ENCODE measurements at regions of chr17 and their contacts with region 1.

Region 1: GRCh38 chr17:61139219-61139618 is 260.4 kb upstream of the TBX2 start:
- DNase-seq: no peak
- ATAC-seq: peak in 3 of 4 donors; percentile 46 to 73 (median 72)
- H3K4me3 ChIP-seq: no peak overlapping the region
- H3K27ac ChIP-seq: peak overlapping the region in 1 of 12 donors; percentile 47
- H3K4me1 ChIP-seq: peaks cover 0 to 29% (median 4%) of the 10 kb centered on the region in 12 donors
- H3K27me3 ChIP-seq: no peaks in the 10 kb centered on the region
- CTCF ChIP-seq: no peak
- POLR2A ChIP-seq: no peak

Region 2: DNA sequence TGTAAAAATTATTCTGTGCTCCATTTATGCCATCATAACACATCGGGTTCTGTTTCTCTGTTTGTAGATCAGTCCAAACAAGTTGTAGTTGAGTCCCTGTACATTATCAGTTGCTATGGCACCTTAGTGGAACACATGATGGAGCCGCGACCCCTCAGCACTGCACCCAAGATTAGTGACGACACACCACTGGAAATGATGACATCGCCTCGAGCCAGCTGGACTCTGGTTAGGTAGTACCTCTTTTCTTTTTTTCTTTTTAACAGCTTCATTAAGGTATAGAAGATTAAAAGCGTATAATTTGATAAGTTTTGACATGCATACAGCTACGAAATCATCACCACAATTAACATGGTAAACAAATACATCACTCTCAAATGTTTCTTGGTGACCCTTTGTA is 101.4 kb before region 1 on chr17:
- intact Hi-C with region 1: no loop called
- DNase-seq: no peak
- ATAC-seq: no peak
- H3K4me3 ChIP-seq: no peak overlapping the region
- H3K27ac ChIP-seq: no peak overlapping the region
- H3K4me1 ChIP-seq: no peaks in the 10 kb centered on the region
- H3K27me3 ChIP-seq: no peaks in the 10 kb centered on the region
- CTCF ChIP-seq: no peak
- POLR2A ChIP-seq: no peak

Region 3: DNA sequence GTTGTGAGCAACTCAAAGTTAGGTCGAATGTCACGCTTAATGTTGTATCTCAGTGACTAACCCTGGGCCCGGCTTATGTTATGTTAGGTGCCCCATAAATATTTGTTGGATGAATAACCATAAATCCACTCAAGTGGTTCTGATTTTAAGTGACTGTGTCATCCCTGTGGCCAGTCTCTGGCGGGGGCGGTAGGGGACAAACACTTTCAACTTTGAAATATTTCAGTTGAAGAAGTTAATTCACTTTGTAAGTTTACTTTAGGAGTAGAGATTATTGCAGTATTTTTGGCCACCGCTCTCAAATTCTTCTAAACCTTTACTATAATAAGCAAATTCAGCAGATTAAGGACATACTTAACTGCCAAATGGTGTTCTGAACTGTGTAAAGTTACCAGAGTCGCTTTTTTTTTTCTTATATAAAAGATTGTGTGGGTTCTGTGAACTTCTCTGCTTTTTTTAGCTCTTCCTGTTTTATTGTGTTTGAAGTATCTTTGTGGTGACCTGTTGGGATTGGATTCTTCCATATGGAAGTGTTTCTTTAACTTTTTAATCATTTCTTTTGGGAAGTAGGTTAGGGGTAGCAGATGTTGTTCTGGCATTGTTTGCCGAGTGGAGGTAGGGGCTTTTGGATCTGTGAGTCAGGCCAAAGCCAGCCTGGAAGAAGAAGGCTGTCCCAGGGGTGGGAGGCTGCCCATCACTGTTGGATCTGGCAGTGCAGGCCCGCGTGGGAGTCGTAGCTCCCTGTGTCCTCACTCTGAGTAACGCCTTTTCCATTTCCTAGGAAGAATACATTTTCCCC is 199.0 kb after region 1 on chr17:
- intact Hi-C with region 1: loop called in 1 of 10 experiments (anchors 10 kb)
- DNase-seq: peak in 2 of 5 donors; percentile 53 to 67
- ATAC-seq: peak in 2 of 4 donors; percentile 41 to 80
- H3K4me3 ChIP-seq: no peak overlapping the region
- H3K27ac ChIP-seq: peak overlapping the region in 11 of 12 donors; percentile 4 to 60 (median 35)
- H3K4me1 ChIP-seq: peaks cover 0 to 40% (median 31%) of the 10 kb centered on the region in 12 donors
- H3K27me3 ChIP-seq: no peaks in the 10 kb centered on the region
- CTCF ChIP-seq: no peak
- POLR2A ChIP-seq: no peak